Head of caudate nucleus (tissue), 42 donors: ENCODE measurements at regions of chr15 and their contacts with region 1.

Region 1: GRCh38 chr15:45307230-45307924 is 55.3 kb downstream of the SLC28A2 start:
- DNase-seq: peak in 5 of 42 donors; percentile 25 to 47 (median 41)

Region 2: DNA sequence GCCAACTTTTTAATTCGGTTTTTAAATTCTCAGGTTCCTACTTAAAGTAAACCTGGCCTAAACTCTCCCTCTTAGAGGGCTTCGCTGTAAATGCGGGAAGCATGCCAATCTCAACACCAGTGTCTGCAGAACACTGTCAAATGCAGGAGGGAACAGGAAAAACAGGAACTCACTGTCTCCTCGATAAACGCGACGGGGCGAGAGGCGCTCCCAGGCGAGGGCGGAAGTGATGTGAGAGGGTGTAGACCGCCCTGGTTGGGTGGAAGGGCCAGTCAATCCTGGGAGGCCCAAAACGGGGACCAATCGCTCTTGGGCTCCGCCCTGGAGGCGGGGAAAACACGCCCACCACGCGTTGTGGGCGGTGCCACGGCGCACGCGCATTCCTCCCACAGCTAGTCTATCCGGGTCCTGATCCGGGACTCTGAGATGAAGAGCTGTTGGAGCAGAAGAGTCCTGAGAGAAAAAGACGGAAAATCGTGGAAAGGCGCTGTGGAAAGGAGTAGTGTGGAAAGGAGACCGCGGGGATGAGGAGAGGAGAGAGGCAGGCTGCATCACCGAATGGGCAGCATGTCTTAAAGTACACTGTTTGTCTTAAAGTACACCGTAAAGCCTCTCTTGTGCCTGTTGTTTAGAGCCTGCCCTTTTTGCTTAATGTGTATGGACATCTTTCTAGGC is 28.2 kb before region 1 on chr15:
- intact Hi-C with region 1: loop called (anchors 2 kb)
- DNase-seq: peak; percentile 96 to 100 (median 99)

Region 3: GRCh38 chr15:45355860-45356259 is 48.5 kb after region 1 on chr15:
- intact Hi-C with region 1: no loop called
- DNase-seq: no peak

Region 4: GRCh38 chr15:45402162-45402954 is 95.0 kb after region 1 on chr15:
- intact Hi-C with region 1: loop called (anchors 5 kb)
- DNase-seq: peak; percentile 93 to 99 (median 98)

Region 5: DNA sequence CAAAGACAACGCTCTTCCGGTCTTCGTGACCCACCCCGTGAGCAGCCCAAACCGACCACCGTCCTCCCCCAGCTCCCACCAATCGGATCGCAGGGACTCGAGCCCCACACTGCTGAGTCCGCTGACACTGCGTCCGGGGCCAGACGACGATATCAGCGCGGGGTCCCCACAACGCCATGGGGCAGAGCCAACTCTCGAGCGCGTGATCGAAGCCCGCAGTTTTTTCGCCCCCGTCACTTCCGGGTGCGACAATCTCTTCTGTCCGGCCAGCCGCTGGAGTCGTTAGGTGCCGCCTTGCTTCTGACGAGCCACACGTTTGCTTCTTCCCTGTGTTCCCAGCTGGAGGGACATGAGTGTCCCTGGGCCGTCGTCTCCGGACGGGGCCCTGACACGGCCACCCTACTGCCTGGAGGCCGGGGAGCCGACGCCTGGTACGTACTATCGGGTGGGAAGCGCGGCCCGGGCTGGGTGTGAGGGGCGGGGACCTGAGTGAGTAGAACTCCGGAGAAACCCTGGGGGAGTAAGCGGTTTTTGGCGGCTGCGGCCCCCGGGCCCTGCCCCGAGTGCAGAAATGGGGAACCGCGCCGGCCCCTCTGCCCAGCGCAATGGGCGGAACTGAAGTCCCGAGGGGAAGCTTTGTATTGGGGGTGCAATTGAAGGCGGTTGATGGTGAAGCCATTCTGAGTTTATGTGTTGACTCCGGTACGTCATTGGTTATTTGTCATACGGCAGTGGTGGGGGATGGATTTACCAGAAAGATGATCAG is 279.9 kb after region 1 on chr15 and contains the start of gene BLOC1S6:
- intact Hi-C with region 1: no loop called
- DNase-seq: peak; percentile 82 to 97 (median 92)